ENCODE measurements at regions of chr6 and their contacts with region 1.

Region 1: DNA sequence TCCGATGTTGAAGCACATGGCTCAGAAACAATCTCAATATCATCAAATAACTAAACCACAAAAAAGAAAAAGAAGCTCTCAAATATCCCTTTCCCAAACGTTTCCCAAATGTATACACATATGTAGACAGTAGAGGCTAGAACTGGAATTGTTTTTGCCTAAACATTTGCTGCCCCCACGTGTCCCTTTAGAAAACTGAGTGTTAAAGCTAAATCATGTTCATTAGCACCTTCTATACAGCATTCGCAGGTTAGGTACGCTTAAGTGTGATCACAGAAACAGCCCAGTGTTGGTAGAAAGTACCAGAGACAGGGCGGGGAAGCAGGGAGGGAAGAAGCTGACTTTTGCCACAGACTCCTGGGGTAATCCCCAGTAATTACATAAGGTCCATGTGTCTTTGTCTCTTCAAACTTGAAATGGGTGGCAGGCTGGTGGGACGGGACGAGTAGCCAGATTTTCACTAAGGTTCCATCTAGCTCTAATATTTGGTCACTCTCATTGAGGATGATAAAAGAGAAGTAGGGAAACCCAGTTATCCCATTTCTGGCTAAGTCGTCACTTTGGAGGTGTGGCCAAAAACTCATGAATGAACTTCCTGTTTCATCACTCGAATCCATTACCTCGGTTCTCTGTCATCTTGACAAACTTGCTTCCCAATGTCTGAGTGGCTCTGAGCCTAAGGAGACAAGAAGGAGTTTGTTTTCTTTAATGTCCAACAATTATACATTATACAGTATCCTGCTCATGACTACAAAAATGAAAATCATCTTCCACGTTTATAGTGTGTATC is 15.0 kb upstream of the TFAP2A start:
- DNase-seq: peak; percentile 40 to 57
- H3K4me3 ChIP-seq: no peak overlapping the region
- H3K27ac ChIP-seq: no peak overlapping the region
- H3K4me1 ChIP-seq: peaks cover 13% of the 10 kb centered on the region
- H3K27me3 ChIP-seq: no peaks in the 10 kb centered on the region
- CTCF ChIP-seq: peak; percentile 66

Region 2: DNA sequence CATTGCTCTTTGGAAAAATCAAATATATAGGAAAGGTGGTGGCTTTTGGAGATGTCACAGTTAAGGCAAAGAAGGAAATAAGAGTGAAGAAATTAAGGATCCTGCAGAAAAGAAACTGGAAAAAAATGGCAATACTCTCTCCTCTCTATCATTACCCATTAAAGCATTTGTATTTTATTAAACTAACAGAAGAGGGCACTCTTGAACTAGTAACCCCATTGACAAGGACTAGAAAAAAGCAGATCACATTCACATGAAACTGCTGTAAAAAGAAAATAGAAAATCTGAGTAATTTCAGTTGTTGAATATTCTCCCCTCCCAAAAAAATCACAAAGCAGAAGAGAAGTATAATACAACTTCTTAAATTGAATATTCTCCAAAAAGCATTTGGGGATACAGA is 1890.4 kb before region 1 on chr6:
- CTCF ChIA-PET with region 1: no interaction called
- POLR2A ChIA-PET with region 1: no interaction called
- intact Hi-C with region 1: loop called (anchors 2 kb)
- DNase-seq: no peak
- H3K4me3 ChIP-seq: no peak overlapping the region
- H3K27ac ChIP-seq: no peak overlapping the region
- H3K4me1 ChIP-seq: no peaks in the 10 kb centered on the region
- H3K27me3 ChIP-seq: no peaks in the 10 kb centered on the region
- CTCF ChIP-seq: peak; percentile 51

Region 3: GRCh38 chr6:8983188-8983688 is 1446.6 kb before region 1 on chr6:
- CTCF ChIA-PET with region 1: interaction called, 6 read pairs
- POLR2A ChIA-PET with region 1: no interaction called
- intact Hi-C with region 1: loop called (anchors 1 kb)
- DNase-seq: peak in 1 of 2 experiments; percentile 76
- H3K4me3 ChIP-seq: no peak overlapping the region
- H3K27ac ChIP-seq: no peak overlapping the region
- H3K4me1 ChIP-seq: no peaks in the 10 kb centered on the region
- H3K27me3 ChIP-seq: no peaks in the 10 kb centered on the region
- CTCF ChIP-seq: peak; percentile 86

Region 4: GRCh38 chr6:9540534-9541126 is 889.2 kb before region 1 on chr6:
- CTCF ChIA-PET with region 1: interaction called, 5 read pairs
- POLR2A ChIA-PET with region 1: no interaction called
- intact Hi-C with region 1: loop called (anchors 5 kb)
- DNase-seq: peak; percentile 22 to 38
- H3K4me3 ChIP-seq: no peak overlapping the region
- H3K27ac ChIP-seq: no peak overlapping the region
- H3K4me1 ChIP-seq: no peaks in the 10 kb centered on the region
- H3K27me3 ChIP-seq: no peaks in the 10 kb centered on the region
- CTCF ChIP-seq: peak; percentile 73

Region 5: GRCh38 chr6:10343320-10343719 is 86.5 kb before region 1 on chr6:
- CTCF ChIA-PET with region 1: no interaction called
- POLR2A ChIA-PET with region 1: no interaction called
- intact Hi-C with region 1: no loop called
- DNase-seq: no peak
- H3K4me3 ChIP-seq: no peak overlapping the region
- H3K27ac ChIP-seq: no peak overlapping the region
- H3K4me1 ChIP-seq: peaks cover 9% of the 10 kb centered on the region
- H3K27me3 ChIP-seq: no peaks in the 10 kb centered on the region
- CTCF ChIP-seq: no peak

Region 6: GRCh38 chr6:10418928-10419748 is 10.7 kb before region 1 on chr6:
- CTCF ChIA-PET with region 1: interaction called, 10 read pairs
- POLR2A ChIA-PET with region 1: no interaction called
- intact Hi-C with region 1: no loop called
- DNase-seq: peak; percentile 78 to 83
- H3K4me3 ChIP-seq: peak overlapping the region; percentile 73
- H3K27ac ChIP-seq: peak overlapping the region; percentile 98
- H3K4me1 ChIP-seq: peaks cover 27% of the 10 kb centered on the region
- H3K27me3 ChIP-seq: no peaks in the 10 kb centered on the region
- CTCF ChIP-seq: no peak

Region 7: DNA sequence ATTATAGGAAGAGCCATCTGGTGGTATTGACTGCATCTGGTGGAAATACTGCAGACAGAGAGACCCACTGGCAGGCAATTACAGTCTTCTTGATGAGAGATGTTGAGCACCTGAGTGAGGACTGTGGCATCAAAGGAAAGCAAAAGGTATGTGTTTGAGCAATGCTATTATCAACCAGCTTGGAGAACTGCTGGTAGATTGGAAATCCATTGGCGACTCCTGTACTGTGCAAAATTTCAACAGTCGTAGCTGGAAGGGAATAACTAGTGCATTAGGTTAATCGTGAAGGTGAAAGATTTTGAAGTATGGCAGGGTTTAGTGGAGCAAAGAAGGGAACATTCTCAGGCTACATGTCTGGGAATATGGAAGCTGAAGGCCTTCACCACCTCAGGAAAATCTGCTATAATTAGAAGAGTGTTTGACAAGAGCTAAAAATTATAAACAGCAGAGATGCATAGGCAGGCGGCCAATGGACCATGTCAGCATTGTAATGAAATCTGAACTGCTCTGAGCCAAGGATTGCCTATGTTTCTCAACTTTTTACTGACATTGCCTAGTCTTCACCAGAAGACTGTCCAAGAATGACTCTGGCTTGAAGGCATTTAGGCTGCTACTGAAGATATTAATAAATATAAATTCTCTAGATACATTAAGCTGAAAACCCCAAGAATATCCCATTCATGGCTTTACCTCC is 180.3 kb after region 1 on chr6:
- CTCF ChIA-PET with region 1: no interaction called
- POLR2A ChIA-PET with region 1: no interaction called
- intact Hi-C with region 1: no loop called
- DNase-seq: no peak
- H3K4me3 ChIP-seq: no peak overlapping the region
- H3K27ac ChIP-seq: no peak overlapping the region
- H3K4me1 ChIP-seq: no peaks in the 10 kb centered on the region
- H3K27me3 ChIP-seq: no peaks in the 10 kb centered on the region
- CTCF ChIP-seq: no peak